Activated naive CD4-positive, alpha-beta T cell treated with anti-CD3 and anti-CD28 coated beads, Interleukin-2, amount 10 ng/mL, durations not matched to agents 7 days and 5 days (primary cell): ENCODE measurements at regions of chr1 and their contacts with region 1.

Region 1: DNA sequence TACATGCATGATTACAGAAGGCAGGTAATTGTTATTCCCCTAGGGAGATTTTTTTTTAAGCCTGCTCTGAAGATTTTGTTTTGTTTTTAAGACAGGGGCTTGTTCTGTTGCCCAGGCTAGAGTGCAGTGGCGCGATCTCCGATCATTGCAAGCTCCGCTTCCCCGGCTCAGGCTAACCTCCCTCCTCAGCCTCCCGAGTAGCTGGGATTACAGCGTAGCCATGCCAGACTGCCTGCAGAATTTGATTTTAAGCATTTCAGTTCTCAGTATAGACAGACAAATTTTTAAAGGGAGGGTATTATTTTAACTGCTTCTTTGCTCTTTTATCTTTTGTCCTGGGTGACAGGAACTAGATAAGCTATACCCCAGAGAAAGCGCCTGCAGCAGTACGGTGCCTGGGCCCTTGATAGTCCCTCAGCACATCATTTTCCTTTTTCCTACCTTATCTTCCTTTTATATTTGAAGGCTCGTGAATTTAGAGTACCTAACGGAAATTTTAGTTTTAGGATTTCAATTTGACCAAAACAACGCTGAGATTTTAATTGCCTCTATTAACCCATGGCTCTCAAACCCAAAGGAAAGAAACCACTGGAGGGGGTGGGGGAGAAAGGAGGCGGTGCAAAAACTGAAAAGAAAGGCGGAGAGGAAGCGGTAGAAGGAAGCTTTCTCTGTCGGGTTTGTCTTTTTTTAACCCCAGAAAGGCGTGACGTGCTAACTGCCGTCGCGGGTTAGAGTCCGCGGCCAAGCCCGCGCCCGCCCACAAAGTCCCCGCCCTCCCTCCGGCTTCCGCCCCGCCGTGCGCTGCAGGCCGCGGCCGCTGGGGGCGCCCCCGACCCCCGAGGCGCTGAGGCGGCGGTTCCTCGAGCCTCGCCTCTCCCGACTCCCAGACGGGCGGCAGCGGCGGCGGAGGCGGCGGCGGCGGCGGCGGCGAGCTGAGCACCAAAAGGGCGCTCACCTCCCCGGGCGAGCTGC is at the start of gene EEIG2:
- DNase-seq: peak; percentile 89
- H3K4me3 Mint-ChIP-seq: peak within 1 kb of the TSS; percentile 96
- H3K27ac Mint-ChIP-seq: peak within 1 kb of the TSS; percentile 85
- H3K4me1 Mint-ChIP-seq: peaks cover 32% of the 10 kb centered on the region
- H3K27me3 Mint-ChIP-seq: no peaks in the 10 kb centered on the region

Region 2: DNA sequence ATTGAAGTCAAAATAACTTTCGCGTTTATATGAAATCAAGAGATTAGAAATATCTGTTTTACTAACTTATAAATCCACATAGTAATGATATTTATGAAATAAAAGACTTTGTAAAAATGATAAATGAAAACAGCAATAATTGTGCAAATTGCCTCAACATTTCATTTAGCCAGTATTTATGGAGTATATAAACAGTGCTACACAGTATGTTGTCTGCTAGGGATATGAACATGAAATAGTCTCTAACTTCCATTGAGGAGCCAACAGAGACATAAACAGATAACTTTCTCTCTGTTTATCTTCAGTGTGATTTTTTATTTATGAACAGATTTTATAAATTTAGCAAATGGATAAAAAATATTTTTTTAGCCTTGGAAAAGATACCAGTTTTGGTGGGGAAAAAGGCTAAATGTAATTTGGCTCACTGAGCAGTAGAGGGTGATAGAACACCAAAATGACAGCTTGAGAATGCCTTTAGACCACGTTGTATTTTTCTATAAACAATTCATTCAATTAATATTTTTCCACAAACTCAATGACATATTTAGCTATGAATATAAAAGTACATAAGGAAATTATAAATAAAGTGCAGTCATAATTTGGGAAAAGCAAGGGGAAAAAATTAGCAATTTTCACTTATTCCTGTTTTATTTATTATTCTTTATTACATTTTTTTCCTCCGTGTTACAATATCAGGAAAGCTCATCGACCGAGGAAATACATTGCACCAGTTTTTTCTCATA is 47.1 kb before region 1 on chr1:
- CTCF ChIA-PET with region 1: interaction called, 80 read pairs
- DNase-seq: no peak
- H3K4me3 Mint-ChIP-seq: no peak overlapping the region
- H3K27ac Mint-ChIP-seq: no peak overlapping the region
- H3K4me1 Mint-ChIP-seq: no peaks in the 10 kb centered on the region
- H3K27me3 Mint-ChIP-seq: peaks cover 28% of the 10 kb centered on the region

Region 3: GRCh38 chr1:108521990-108522393 is 37.5 kb before region 1 on chr1:
- CTCF ChIA-PET with region 1: interaction called, 15 read pairs
- DNase-seq: no peak
- H3K4me3 Mint-ChIP-seq: no peak overlapping the region
- H3K27ac Mint-ChIP-seq: no peak overlapping the region
- H3K4me1 Mint-ChIP-seq: no peaks in the 10 kb centered on the region
- H3K27me3 Mint-ChIP-seq: peaks cover 21% of the 10 kb centered on the region

Region 4: DNA sequence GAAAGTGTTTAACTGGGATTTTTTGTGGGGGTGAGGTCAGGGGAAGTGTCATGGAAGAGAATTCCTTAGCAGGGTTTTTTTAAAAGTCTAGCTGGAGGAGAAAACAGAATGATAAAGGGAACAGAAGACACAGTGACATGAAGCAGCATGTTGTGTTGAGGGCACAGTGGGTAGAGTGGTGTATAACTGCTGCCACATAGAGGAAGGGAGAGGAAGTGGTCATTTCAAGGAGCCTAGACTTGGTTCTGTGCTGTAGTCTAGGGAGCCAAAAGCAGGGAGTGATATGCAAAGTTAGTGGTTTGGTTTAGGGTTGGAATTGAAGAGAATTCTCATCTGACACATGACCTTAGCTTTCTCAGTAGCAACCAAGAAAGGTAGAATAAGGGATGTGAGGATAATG is 10.6 kb after region 1 on chr1:
- CTCF ChIA-PET with region 1: interaction called, 22 read pairs
- DNase-seq: peak; percentile 29
- H3K4me3 Mint-ChIP-seq: no peak overlapping the region
- H3K27ac Mint-ChIP-seq: no peak overlapping the region
- H3K4me1 Mint-ChIP-seq: no peaks in the 10 kb centered on the region
- H3K27me3 Mint-ChIP-seq: no peaks in the 10 kb centered on the region

Region 5: GRCh38 chr1:108600504-108600903 is 41.0 kb after region 1 on chr1:
- CTCF ChIA-PET with region 1: no interaction called
- DNase-seq: no peak
- H3K4me3 Mint-ChIP-seq: no peak overlapping the region
- H3K27ac Mint-ChIP-seq: no peak overlapping the region
- H3K4me1 Mint-ChIP-seq: no peaks in the 10 kb centered on the region
- H3K27me3 Mint-ChIP-seq: no peaks in the 10 kb centered on the region

Region 6: GRCh38 chr1:108617008-108617723 is 57.7 kb after region 1 on chr1:
- CTCF ChIA-PET with region 1: no interaction called
- DNase-seq: no peak
- H3K4me3 Mint-ChIP-seq: no peak overlapping the region
- H3K27ac Mint-ChIP-seq: no peak overlapping the region
- H3K4me1 Mint-ChIP-seq: no peaks in the 10 kb centered on the region
- H3K27me3 Mint-ChIP-seq: no peaks in the 10 kb centered on the region

Region 7: GRCh38 chr1:108643492-108644335 is 84.2 kb after region 1 on chr1:
- CTCF ChIA-PET with region 1: interaction called, 84 read pairs
- DNase-seq: peak; percentile 68
- H3K4me3 Mint-ChIP-seq: no peak overlapping the region
- H3K27ac Mint-ChIP-seq: peak overlapping the region; percentile 100
- H3K4me1 Mint-ChIP-seq: peaks cover 73% of the 10 kb centered on the region
- H3K27me3 Mint-ChIP-seq: no peaks in the 10 kb centered on the region

Region 8: DNA sequence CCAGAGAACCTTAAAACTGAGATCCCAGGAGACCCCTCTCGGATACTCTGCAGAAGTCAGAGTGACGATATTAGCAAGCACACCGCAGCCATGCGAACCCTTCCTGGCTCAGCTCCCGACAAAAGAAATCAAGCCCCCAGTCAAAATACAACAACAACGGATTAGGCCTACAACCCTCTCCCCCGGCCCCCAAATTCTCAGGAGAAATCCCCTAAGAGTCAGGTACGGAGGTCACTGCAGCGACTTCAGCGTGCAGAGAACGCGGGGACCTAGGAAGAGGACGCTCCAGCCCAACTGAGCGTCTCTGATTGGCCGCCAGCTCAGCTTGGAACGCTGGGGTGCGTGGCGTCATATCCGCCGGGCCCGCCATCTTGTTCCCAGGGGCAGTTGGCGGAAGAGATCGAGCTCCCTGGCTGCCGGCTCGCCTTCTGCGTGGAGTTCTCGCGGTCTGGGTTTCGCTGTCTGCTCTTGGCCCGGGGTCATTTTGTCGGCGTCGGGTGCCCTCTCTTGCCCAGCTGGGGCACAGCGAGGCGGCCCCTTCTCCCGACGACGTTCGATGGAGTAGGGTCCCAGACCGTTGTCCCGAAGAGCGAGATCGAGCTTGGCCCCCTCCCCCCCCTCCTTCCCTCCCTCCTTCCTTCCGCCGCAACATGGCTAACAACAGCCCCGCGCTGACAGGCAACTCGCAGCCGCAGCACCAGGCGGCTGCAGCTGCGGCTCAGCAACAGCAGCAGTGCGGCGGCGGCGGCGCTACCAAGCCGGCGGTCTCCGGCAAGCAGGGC is 132.6 kb after region 1 on chr1 and contains the start of gene PRPF38B:
- CTCF ChIA-PET with region 1: interaction called, 12 read pairs
- DNase-seq: peak; percentile 97
- H3K4me3 Mint-ChIP-seq: peak within 1 kb of the TSS; percentile 94
- H3K27ac Mint-ChIP-seq: peak within 1 kb of the TSS; percentile 98
- H3K4me1 Mint-ChIP-seq: peaks cover 40% of the 10 kb centered on the region
- H3K27me3 Mint-ChIP-seq: peaks cover 7% of the 10 kb centered on the region

Region 9: DNA sequence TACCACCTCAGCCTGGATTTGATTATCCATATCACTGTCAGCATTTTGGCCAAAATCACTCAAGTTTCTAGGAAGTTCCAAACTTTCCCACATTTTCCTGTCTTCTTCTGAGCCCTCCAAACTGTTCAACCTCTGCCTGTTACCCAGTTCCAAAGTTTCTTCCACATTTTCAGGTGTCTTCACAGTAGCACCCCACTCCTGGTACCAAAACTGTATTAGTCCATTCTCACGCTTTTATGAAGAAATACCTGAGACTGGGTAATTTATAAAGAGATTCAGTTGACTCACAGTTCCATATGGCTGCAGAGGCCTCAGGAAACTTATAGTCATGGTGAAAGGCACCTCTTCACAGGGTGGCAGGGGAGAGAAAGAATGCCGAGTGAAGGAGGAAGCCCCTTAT is 226.4 kb after region 1 on chr1:
- CTCF ChIA-PET with region 1: no interaction called
- DNase-seq: no peak
- H3K4me3 Mint-ChIP-seq: no peak overlapping the region
- H3K27ac Mint-ChIP-seq: no peak overlapping the region
- H3K4me1 Mint-ChIP-seq: no peaks in the 10 kb centered on the region
- H3K27me3 Mint-ChIP-seq: no peaks in the 10 kb centered on the region